ENCODE measurements at regions of chr12 and their contacts with region 1.

Region 1: DNA sequence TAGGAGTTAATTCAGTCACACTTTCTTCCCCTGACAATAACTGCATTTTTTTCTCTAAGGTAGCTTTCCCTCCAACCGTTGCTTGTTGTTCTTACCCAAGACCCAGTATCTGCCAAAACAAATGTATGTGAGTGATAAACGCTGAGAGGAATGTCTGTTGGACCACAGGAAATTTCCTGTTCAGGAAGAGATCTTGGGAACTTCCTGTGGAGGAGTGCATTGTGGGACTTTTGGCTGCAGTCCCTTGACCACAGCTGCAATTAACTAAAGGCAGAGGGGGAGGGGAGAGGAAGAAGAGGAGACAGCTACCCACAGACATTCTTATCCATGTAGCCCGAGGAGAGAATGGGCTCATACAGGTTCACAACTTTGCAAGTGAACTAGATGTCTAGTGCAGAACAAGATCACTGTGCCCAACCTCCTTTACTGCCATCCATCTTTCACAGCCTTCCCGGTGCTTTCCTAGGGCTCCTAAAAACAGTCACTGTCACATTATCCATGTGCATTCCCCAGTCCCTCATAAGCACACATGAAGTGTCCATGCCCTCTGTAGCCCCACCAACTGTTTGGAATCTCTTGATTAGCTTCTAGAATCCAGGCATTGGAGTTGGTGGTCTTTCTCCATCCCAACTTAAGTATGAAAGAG is 149.5 kb downstream of the ETV6 start:
- DNase-seq: no peak
- H3K4me3 ChIP-seq: no peak overlapping the region
- H3K4me3 Mint-ChIP-seq: no peak overlapping the region
- H3K27ac Mint-ChIP-seq: no peak overlapping the region
- H3K4me1 ChIP-seq: peaks cover 47% of the 10 kb centered on the region
- H3K4me1 Mint-ChIP-seq: peaks cover 46% of the 10 kb centered on the region
- H3K27me3 ChIP-seq: no peaks in the 10 kb centered on the region
- H3K27me3 Mint-ChIP-seq: no peaks in the 10 kb centered on the region
- CTCF ChIP-seq: no peak

Region 2: DNA sequence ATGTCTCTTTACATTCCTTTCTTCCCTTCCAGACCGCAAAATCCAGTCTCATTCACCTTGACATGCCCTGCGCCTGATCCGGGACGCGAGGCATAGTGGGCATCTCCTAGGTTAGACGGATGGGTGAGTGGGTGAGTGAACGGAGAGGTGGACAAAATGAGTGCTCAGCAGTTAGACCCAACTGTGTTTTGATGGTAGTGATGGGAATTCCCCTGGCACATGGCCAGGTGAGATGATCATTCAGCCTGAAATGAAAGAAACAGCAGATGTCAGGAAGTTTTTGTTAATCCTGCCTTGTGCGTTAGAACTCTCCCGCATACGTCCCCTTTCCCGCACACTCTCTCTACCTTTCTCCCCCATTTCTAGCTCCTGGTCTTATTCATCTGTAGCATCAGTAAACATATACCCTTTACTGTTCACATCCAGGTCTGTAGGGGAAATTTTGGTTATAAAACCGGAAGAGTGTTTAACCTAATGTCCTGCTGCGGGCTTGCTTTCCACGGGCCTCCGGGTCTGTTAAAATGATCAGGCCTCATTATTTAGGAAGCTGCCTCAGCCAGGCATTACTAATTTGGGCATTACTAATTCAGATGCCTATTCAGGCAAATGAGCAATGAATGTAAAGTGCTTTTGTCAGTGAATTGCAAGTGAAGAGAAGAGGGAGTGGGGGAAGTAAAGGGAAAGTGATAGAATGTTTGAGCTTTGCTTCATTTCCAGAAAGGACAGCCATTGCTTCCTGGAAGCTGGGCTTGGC is 23.3 kb after region 1 on chr12:
- CTCF ChIA-PET with region 1: no interaction called
- POLR2A ChIA-PET with region 1: no interaction called
- intact Hi-C with region 1: loop called (anchors 2 kb)
- DNase-seq: no peak
- H3K4me3 ChIP-seq: no peak overlapping the region
- H3K4me3 Mint-ChIP-seq: no peak overlapping the region
- H3K27ac Mint-ChIP-seq: no peak overlapping the region
- H3K4me1 ChIP-seq: no peaks in the 10 kb centered on the region
- H3K4me1 Mint-ChIP-seq: peaks cover 5% of the 10 kb centered on the region
- H3K27me3 ChIP-seq: no peaks in the 10 kb centered on the region
- H3K27me3 Mint-ChIP-seq: no peaks in the 10 kb centered on the region
- CTCF ChIP-seq: no peak